Testis (tissue), 5 donors: ENCODE measurements at regions of chr10 and their contacts with region 1.

Region 1: GRCh38 chr10:71396084-71396720 is 518 bp upstream of the CDH23 start:
- DNase-seq: peak; percentile 86
- H3K4me3 ChIP-seq: peak overlapping the region; percentile 55 to 64
- H3K27ac ChIP-seq: peak overlapping the region; percentile 63 to 69
- H3K4me1 ChIP-seq: peaks cover 11% of the 10 kb centered on the region
- H3K27me3 ChIP-seq: no peaks in the 10 kb centered on the region
- CTCF ChIP-seq: peak; percentile 65 to 82 (median 65)
- POLR2A ChIP-seq: no peak

Region 2: DNA sequence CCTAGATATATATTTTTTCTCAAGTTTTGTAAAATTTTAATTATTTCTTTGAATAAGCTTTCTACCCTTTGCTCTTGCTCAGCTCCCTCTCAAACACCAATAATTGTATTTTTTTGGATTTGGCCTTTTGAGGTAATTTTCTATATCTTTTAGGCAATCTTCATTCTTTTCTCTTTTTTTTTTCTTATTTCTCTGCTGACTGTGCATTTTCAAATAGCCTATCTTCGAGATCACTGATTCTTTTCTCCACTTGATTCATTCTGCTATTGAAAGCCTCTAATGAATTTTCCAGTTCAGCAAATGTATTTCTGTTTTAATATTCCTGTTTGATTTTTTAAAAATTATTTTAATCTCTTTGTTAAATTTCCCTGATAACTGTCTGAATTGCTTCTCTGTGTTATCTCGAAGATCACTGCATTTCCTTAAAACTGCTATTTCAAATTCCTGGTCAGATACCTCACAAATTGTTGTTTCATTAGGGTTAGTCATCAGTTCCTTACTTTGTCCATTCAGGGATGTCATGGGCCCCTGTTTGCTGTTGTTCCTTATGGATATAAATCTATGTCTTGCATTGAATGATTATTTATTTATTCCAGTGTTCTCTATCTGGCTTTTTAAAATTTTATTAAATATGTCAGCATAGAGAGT is 283.9 kb before region 1 on chr10:
- intact Hi-C with region 1: no loop called
- DNase-seq: no peak
- H3K4me3 ChIP-seq: no peak overlapping the region
- H3K27ac ChIP-seq: no peak overlapping the region
- H3K4me1 ChIP-seq: no peaks in the 10 kb centered on the region
- H3K27me3 ChIP-seq: no peaks in the 10 kb centered on the region
- CTCF ChIP-seq: no peak
- POLR2A ChIP-seq: no peak

Region 3: DNA sequence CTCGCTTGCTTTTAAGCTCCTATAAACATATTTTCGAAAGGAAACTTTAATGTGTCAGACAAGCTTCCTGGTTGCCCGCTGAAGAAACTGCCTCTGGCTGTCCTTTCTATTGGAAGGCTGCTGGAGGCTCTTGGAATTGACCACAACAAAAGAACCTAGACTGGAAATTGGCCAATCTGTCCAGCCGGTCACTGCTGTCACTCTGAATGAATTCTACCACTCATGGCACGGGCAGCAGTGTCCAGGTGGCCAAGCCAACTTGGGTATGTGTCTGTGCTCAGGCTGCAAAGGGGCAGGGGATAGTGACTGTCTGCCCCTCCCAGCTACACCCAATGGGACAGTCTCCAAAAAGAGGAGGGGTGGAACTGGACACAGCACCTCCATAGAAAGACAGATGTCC is 58.1 kb after region 1 on chr10:
- intact Hi-C with region 1: no loop called
- DNase-seq: no peak
- H3K4me3 ChIP-seq: no peak overlapping the region
- H3K27ac ChIP-seq: no peak overlapping the region
- H3K4me1 ChIP-seq: peaks cover 3% of the 10 kb centered on the region
- H3K27me3 ChIP-seq: no peaks in the 10 kb centered on the region
- CTCF ChIP-seq: no peak
- POLR2A ChIP-seq: no peak

Region 4: GRCh38 chr10:71473671-71474599 is 77.7 kb after region 1 on chr10:
- intact Hi-C with region 1: no loop called
- DNase-seq: peak; percentile 78
- H3K4me3 ChIP-seq: no peak overlapping the region
- H3K27ac ChIP-seq: peak overlapping the region in 1 of 2 donors; percentile 28
- H3K4me1 ChIP-seq: peaks cover 59% of the 10 kb centered on the region
- H3K27me3 ChIP-seq: no peaks in the 10 kb centered on the region
- CTCF ChIP-seq: no peak
- POLR2A ChIP-seq: no peak

Region 5: GRCh38 chr10:71812016-71812912 is 416.1 kb after region 1 on chr10:
- intact Hi-C with region 1: loop called (anchors 10 kb)
- DNase-seq: peak; percentile 55
- H3K4me3 ChIP-seq: no peak overlapping the region
- H3K27ac ChIP-seq: no peak overlapping the region
- H3K4me1 ChIP-seq: no peaks in the 10 kb centered on the region
- H3K27me3 ChIP-seq: no peaks in the 10 kb centered on the region
- CTCF ChIP-seq: peak; percentile 71 to 74 (median 73)
- POLR2A ChIP-seq: no peak